Activated CD4-positive, alpha-beta memory T cell treated with anti-CD3 and anti-CD28 coated beads for 36 hours (primary cell): ENCODE measurements at regions of chr2 and their contacts with region 1.

Region 1: GRCh38 chr2:62456721-62457539 is 49.1 kb downstream of the TMEM17 start:
- DNase-seq: peak; percentile 72
- H3K4me3 Mint-ChIP-seq: peak overlapping the region; percentile 23
- H3K27ac Mint-ChIP-seq: no peak overlapping the region
- H3K4me1 Mint-ChIP-seq: no peaks in the 10 kb centered on the region
- H3K27me3 Mint-ChIP-seq: peaks cover 3% of the 10 kb centered on the region

Region 2: GRCh38 chr2:62208759-62209114 is 248.2 kb before region 1 on chr2:
- CTCF ChIA-PET with region 1: no interaction called
- POLR2A ChIA-PET with region 1: no interaction called
- intact Hi-C with region 1: no loop called
- DNase-seq: peak; percentile 54
- H3K4me3 Mint-ChIP-seq: no peak overlapping the region
- H3K27ac Mint-ChIP-seq: peak overlapping the region; percentile 44
- H3K4me1 Mint-ChIP-seq: peaks cover 78% of the 10 kb centered on the region
- H3K27me3 Mint-ChIP-seq: no peaks in the 10 kb centered on the region

Region 3: GRCh38 chr2:62227386-62228075 is 229.4 kb before region 1 on chr2:
- CTCF ChIA-PET with region 1: no interaction called
- POLR2A ChIA-PET with region 1: no interaction called
- intact Hi-C with region 1: no loop called
- DNase-seq: no peak
- H3K4me3 Mint-ChIP-seq: no peak overlapping the region
- H3K27ac Mint-ChIP-seq: peak overlapping the region; percentile 35
- H3K4me1 Mint-ChIP-seq: peaks cover 17% of the 10 kb centered on the region
- H3K27me3 Mint-ChIP-seq: no peaks in the 10 kb centered on the region

Region 4: GRCh38 chr2:62467475-62468321 is 10.8 kb after region 1 on chr2:
- CTCF ChIA-PET with region 1: interaction called, 13 read pairs
- POLR2A ChIA-PET with region 1: no interaction called
- intact Hi-C with region 1: no loop called
- DNase-seq: no peak
- H3K4me3 Mint-ChIP-seq: no peak overlapping the region
- H3K27ac Mint-ChIP-seq: no peak overlapping the region
- H3K4me1 Mint-ChIP-seq: no peaks in the 10 kb centered on the region
- H3K27me3 Mint-ChIP-seq: peaks cover 1% of the 10 kb centered on the region

Region 5: GRCh38 chr2:62724886-62725711 is 268.2 kb after region 1 on chr2:
- CTCF ChIA-PET with region 1: interaction called, 8 read pairs
- POLR2A ChIA-PET with region 1: no interaction called
- intact Hi-C with region 1: loop called (anchors 5 kb)
- DNase-seq: peak; percentile 42
- H3K4me3 Mint-ChIP-seq: no peak overlapping the region
- H3K27ac Mint-ChIP-seq: no peak overlapping the region
- H3K4me1 Mint-ChIP-seq: peaks cover 9% of the 10 kb centered on the region
- H3K27me3 Mint-ChIP-seq: no peaks in the 10 kb centered on the region

Region 6: GRCh38 chr2:62774555-62775366 is 317.8 kb after region 1 on chr2:
- CTCF ChIA-PET with region 1: interaction called, 173 read pairs
- POLR2A ChIA-PET with region 1: no interaction called
- intact Hi-C with region 1: loop called (anchors 1 kb)
- DNase-seq: no peak
- H3K4me3 Mint-ChIP-seq: no peak overlapping the region
- H3K27ac Mint-ChIP-seq: no peak overlapping the region
- H3K4me1 Mint-ChIP-seq: peaks cover 4% of the 10 kb centered on the region
- H3K27me3 Mint-ChIP-seq: no peaks in the 10 kb centered on the region

Region 7: GRCh38 chr2:63424329-63425078 is 967.6 kb after region 1 on chr2:
- CTCF ChIA-PET with region 1: interaction called, 18 read pairs
- POLR2A ChIA-PET with region 1: no interaction called
- intact Hi-C with region 1: loop called (anchors 2 kb)
- DNase-seq: no peak
- H3K4me3 Mint-ChIP-seq: no peak overlapping the region
- H3K27ac Mint-ChIP-seq: no peak overlapping the region
- H3K4me1 Mint-ChIP-seq: no peaks in the 10 kb centered on the region
- H3K27me3 Mint-ChIP-seq: no peaks in the 10 kb centered on the region

Region 8: DNA sequence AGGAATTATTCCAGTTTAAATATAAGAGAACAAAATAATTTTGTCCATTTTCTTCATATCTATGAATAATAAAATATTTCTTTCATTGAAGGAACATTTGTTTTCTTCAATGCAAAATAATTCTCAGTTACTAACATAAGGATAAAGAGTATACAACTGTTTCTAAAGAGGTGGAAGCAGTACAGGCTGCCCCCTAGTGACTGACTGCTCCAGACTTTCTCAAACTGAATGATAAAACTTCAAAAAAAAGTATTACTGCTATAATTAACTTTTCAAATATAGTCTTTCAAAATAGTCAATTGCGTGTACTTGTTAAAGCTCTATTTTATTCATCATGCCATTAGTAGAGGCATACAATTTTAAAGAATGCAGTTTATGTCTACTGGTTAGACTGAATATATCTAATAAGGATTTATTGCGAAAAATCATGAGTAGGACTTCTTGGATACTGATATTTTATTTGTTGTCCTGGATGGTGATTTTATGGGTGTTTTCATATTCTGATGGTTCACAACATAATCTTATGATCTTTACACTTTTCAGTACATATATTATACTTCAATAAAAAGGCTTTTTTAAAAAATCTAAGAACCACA is 1031.3 kb after region 1 on chr2:
- CTCF ChIA-PET with region 1: interaction called, 6 read pairs
- POLR2A ChIA-PET with region 1: no interaction called
- intact Hi-C with region 1: loop called (anchors 2 kb)
- DNase-seq: peak; percentile 9
- H3K4me3 Mint-ChIP-seq: no peak overlapping the region
- H3K27ac Mint-ChIP-seq: no peak overlapping the region
- H3K4me1 Mint-ChIP-seq: no peaks in the 10 kb centered on the region
- H3K27me3 Mint-ChIP-seq: no peaks in the 10 kb centered on the region